Activated T-helper 1 cell treated with anti-CD3 and anti-CD28 coated beads, Interleukin-12 subunit alpha, Interleukin-12 subunit beta, Interleukin-2, Interleukin-4 antibody, amounts not matched to agents 30 ng/mL and 10 ng/mL and 1 ng/mL, durations not matched to agents 14 hours and 24 hours and 36 hours (primary cell): ENCODE measurements at regions of chr16 and their contacts with region 1.

Region 1: DNA sequence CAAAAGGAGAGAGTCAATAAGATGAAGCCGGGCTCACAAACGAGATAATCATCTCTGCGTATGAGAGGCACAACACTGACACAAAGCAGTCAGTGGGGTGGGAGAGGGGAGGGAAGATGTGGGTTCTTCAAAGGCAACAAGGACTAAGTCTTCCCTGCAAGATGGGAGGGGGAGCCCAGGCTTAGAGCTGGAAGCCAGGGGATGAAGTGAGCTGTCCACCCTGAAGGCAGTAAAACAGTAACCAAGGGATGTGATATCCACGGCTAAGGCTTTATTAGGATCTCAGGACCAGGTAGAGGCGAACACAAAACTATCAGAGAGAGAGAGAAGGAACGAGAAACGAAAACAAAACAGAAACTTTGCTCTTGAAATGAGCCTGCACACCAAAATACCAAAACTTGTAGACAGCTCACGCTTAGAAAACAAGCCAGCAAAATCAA is 115.9 kb downstream of the DYNLRB2 start:
- DNase-seq: peak; percentile 42
- H3K4me3 Mint-ChIP-seq: peak overlapping the region; percentile 85
- H3K27ac Mint-ChIP-seq: peak overlapping the region; percentile 91
- H3K4me1 Mint-ChIP-seq: peaks cover 43% of the 10 kb centered on the region
- H3K27me3 Mint-ChIP-seq: no peaks in the 10 kb centered on the region

Region 2: DNA sequence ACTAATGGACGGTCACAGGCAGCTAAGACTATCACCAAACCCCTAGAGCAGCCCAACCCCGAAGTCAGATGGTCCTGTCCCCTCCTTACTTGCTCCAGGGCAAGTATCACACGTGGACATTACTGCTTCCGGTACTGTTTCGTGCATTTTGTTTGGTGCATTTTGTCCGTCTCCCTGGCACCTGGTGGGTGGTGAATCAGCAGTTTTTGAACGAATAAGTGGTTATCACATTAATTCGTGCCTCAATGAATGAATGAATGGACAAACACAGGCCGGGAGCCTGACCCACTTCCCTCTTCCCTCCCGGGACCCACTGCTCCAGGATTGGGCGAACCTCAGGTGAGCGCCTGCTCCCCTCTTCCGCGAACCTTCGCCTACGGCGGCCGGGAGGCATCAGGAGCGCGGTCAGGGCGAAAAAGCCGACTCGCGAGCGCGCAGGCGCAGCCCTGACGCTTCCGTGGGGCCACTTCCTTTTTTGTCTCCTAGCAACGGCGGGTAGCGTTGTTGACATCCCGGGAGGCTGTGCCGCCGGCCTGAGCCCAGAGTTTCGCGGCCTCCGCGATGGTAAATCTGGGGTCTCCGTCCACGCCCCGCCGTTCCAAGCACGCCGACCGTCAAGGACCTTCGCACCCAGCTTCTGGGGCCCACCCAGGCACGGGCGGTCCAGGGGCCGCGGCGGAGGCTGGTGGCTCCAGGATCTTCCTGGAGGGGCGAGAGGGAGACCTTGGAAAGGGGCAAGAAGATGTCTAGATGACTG is 116.0 kb before region 1 on chr16 and contains the start of gene DYNLRB2:
- intact Hi-C with region 1: loop called (anchors 1 kb)
- DNase-seq: peak; percentile 92
- H3K4me3 Mint-ChIP-seq: peak within 1 kb of the TSS; percentile 87
- H3K27ac Mint-ChIP-seq: peak within 1 kb of the TSS; percentile 96
- H3K4me1 Mint-ChIP-seq: peaks cover 38% of the 10 kb centered on the region
- H3K27me3 Mint-ChIP-seq: peaks cover 2% of the 10 kb centered on the region
- total RNA-seq, gene DYNLRB2: not detected in 2 replicates

Region 3: DNA sequence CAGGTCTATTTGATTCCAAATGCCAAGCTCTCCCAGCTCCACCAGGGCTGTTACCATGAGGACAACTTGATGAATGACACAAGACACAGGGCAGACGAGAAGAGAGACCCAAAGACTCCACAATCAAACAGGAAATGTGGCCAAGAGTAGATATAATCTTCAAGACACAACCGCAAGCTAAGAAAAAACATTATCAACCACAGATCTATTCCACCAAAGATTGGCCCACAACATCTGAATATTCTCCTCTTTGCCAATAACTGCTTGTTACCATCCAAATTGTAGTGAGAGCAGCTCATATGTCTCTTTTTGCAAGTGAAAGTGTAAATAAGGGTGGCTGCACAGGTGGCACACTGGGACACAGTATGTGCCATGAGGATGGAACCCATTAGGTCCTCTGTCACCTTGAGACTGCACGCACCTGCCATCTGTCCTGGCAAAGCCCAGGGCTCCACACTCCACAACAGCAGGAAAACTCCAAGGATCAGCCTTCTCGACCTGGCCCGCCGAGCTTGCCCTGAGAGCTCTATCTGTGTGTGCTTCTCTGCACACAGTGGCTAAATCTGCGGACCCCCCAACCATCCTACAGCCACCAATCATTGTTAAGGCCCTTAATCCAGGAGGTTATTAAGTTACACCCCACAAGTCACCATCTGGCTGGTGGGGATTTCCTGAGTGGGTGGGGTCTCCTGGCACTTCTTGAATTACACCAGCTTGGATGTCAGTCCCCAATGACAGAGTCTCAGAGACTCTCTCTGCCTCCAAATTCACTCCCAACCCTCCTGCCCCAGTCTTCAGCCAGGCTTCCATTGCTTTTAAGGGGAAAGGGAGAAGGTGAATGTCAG is 65.4 kb before region 1 on chr16:
- intact Hi-C with region 1: loop called (anchors 1 kb)
- DNase-seq: peak; percentile 53
- H3K4me3 Mint-ChIP-seq: peak overlapping the region; percentile 17
- H3K27ac Mint-ChIP-seq: peak overlapping the region; percentile 76
- H3K4me1 Mint-ChIP-seq: peaks cover 66% of the 10 kb centered on the region
- H3K27me3 Mint-ChIP-seq: no peaks in the 10 kb centered on the region

Region 4: DNA sequence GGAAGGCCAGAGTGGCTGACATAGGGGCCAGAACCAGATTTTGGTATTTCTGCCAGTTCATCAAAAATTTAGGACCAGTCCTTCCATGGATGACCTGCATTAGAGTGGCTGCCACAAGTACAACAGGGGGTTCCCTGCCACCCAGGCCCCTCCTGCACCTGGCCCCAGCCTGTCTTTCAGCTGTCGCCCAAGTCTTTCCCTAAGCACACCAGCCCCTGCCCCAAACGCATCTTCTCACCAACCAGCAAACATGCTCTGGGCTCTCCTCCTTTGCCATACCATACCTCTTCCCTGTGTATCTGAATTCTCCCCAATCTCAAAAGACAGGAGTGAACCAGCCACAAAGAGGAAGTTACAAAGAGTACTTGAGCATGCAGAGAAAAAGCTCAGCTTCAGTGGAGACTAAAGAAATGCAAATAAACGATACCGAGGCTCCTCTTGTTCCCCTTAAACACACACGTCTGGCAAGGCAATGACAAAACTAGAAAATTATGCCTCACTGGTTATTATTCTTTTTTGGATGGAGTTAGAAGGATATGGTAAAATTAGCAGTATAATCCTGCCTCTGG is 14.6 kb after region 1 on chr16:
- intact Hi-C with region 1: loop called (anchors 2 kb)
- DNase-seq: no peak
- H3K4me3 Mint-ChIP-seq: no peak overlapping the region
- H3K27ac Mint-ChIP-seq: no peak overlapping the region
- H3K4me1 Mint-ChIP-seq: peaks cover 34% of the 10 kb centered on the region
- H3K27me3 Mint-ChIP-seq: no peaks in the 10 kb centered on the region

Region 5: DNA sequence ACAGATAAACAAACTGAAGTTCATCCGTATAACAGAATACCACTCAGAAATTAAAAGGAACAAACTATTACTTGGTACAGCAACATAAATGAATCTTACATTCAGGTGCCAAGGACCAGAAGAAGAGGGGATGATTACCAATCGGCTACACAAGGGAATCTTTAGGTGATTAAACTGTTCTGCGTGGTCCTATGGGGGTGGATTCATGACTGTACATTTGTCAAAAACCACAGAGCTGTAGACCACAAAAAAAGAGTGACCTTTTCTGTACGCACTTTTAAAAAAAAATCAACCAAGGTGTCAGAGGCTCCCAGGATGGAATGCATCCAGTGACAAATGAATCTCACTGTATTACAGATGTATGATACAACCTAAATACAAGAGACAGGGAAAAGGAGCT is 36.8 kb after region 1 on chr16:
- intact Hi-C with region 1: loop called (anchors 2 kb)
- DNase-seq: no peak
- H3K4me3 Mint-ChIP-seq: no peak overlapping the region
- H3K27ac Mint-ChIP-seq: peak overlapping the region; percentile 71
- H3K4me1 Mint-ChIP-seq: peaks cover 83% of the 10 kb centered on the region
- H3K27me3 Mint-ChIP-seq: peaks cover 1% of the 10 kb centered on the region

Region 6: GRCh38 chr16:80751190-80751589 is 94.5 kb after region 1 on chr16:
- intact Hi-C with region 1: no loop called
- DNase-seq: no peak
- H3K4me3 Mint-ChIP-seq: no peak overlapping the region
- H3K27ac Mint-ChIP-seq: peak overlapping the region; percentile 28
- H3K4me1 Mint-ChIP-seq: peaks cover 47% of the 10 kb centered on the region
- H3K27me3 Mint-ChIP-seq: no peaks in the 10 kb centered on the region

Region 7: DNA sequence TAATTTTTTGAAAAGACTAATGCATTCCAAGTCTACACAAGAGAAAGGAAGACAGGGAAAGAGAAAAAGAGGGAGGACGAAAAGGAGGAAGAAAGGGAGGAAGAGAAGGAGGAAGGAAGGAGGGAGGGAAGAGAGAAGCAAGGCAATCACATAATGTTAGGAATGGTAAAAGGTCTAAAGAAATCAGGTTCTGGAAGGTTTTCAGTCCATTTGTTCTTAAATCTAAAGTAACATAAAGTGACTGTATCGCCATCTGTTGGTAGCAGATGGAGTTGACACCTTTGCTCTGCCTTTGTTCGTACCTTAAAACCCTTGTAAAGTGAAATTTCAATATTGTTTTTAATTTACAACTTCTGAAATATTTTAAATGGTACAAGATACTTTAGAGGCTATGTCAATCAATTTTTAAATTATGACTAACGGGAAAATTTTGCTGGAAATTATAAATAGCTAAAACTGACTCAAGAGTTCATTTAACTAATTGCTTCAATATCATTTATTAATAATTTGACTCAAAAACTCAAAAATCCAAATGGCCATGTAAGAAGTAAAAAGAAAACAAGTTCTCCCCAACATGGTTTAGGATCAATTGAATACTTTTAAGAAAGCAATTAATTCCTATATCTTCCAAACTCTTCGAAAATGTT is 168.1 kb after region 1 on chr16:
- intact Hi-C with region 1: loop called (anchors 1 kb)
- DNase-seq: no peak
- H3K4me3 Mint-ChIP-seq: no peak overlapping the region
- H3K27ac Mint-ChIP-seq: no peak overlapping the region
- H3K4me1 Mint-ChIP-seq: peaks cover 7% of the 10 kb centered on the region
- H3K27me3 Mint-ChIP-seq: peaks cover 15% of the 10 kb centered on the region